ENCODE measurements at regions of chr4 and their contacts with region 1.

Region 1: GRCh38 chr4:112765317-112765975 is 128.5 kb downstream of the LARP7 start:
- DNase-seq: peak; percentile 31 to 57 (median 55)
- H3K4me3 ChIP-seq: no peak overlapping the region
- H3K27ac ChIP-seq: no peak overlapping the region
- H3K4me1 ChIP-seq: no peaks in the 10 kb centered on the region
- H3K27me3 ChIP-seq: peaks cover 0 to 2% (median 0%) of the 10 kb centered on the region in 5 experiments

Region 2: GRCh38 chr4:112633477-112634235 is 131.8 kb before region 1 on chr4:
- CTCF ChIA-PET with region 1: interaction called, 17 read pairs
- POLR2A ChIA-PET with region 1: no interaction called
- DNase-seq: peak; percentile 36 to 62 (median 57)
- H3K4me3 ChIP-seq: peak overlapping the region in 1 of 7 experiments; percentile 64
- H3K27ac ChIP-seq: peak overlapping the region in 1 of 2 experiments; percentile 18
- H3K4me1 ChIP-seq: peaks cover 10 to 24% (median 16%) of the 10 kb centered on the region in 4 experiments
- H3K27me3 ChIP-seq: no peaks in the 10 kb centered on the region

Region 3: DNA sequence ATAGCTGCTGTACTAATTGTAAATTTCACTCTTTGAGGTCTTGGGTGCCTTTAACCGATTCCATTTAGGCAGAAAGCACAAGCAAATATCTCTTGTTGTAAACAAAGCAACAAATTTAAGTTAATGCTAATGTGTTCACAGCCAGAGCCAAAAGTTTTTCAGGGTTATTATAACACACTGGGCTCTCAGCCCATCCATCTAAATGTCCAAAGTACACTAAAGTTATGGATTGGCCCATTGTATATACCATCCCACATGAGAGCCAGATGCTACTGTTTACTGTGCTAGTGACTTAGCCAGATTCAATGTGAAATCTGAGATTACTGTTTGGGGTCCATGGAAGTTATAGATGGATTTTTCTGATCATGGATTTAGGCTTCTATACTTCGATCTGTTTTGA is 58.2 kb after region 1 on chr4:
- CTCF ChIA-PET with region 1: no interaction called
- POLR2A ChIA-PET with region 1: no interaction called
- DNase-seq: no peak
- H3K4me3 ChIP-seq: no peak overlapping the region
- H3K27ac ChIP-seq: no peak overlapping the region
- H3K4me1 ChIP-seq: peaks cover 0 to under 1% (median 0%) of the 10 kb centered on the region in 4 experiments
- H3K27me3 ChIP-seq: peaks cover 0 to 18% (median 0%) of the 10 kb centered on the region in 5 experiments

Measured in common myeloid progenitor, CD34-positive (primary cell).